ENCODE measurements at regions of chr7 and their contacts with region 1.

Region 1: DNA sequence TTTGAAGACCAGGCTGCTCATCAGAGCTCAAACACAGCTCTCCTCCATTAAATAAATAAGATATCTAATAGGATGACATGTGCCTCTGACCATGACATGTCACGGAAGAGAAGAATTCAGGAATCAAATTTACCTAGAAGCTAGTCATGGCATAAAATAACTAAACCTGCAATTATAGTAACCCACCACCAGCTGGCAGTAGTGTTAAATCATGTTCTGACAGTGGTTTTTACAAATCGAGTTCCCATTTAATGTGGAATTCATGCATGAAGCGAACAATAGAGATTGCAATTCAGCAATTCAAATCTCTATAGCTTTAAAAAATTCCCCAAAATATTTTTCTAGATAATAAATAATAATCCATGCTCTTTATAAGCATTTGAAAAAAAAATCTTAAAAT is 74.6 kb upstream of the IKZF1 start:
- DNase-seq: no peak
- H3K4me3 Mint-ChIP-seq: no peak overlapping the region
- H3K27ac Mint-ChIP-seq: no peak overlapping the region
- H3K4me1 Mint-ChIP-seq: peaks cover 36% of the 10 kb centered on the region
- H3K27me3 Mint-ChIP-seq: no peaks in the 10 kb centered on the region

Region 2: GRCh38 chr7:50212666-50213621 is 17.0 kb before region 1 on chr7:
- CTCF ChIA-PET with region 1: interaction called, 42 read pairs
- POLR2A ChIA-PET with region 1: interaction called, 7 read pairs
- intact Hi-C with region 1: loop called (anchors 1 kb)
- DNase-seq: peak; percentile 47
- H3K4me3 Mint-ChIP-seq: peak overlapping the region; percentile 28
- H3K27ac Mint-ChIP-seq: peak overlapping the region; percentile 71
- H3K4me1 Mint-ChIP-seq: peaks cover 84% of the 10 kb centered on the region
- H3K27me3 Mint-ChIP-seq: no peaks in the 10 kb centered on the region

Region 3: GRCh38 chr7:50246551-50246950 is 16.6 kb after region 1 on chr7:
- CTCF ChIA-PET with region 1: interaction called, 3 read pairs
- POLR2A ChIA-PET with region 1: no interaction called
- intact Hi-C with region 1: loop called (anchors 2 kb)
- DNase-seq: no peak
- H3K4me3 Mint-ChIP-seq: no peak overlapping the region
- H3K27ac Mint-ChIP-seq: no peak overlapping the region
- H3K4me1 Mint-ChIP-seq: peaks cover 10% of the 10 kb centered on the region
- H3K27me3 Mint-ChIP-seq: no peaks in the 10 kb centered on the region

Region 4: GRCh38 chr7:50261593-50261992 is 31.6 kb after region 1 on chr7:
- CTCF ChIA-PET with region 1: interaction called, 18 read pairs
- POLR2A ChIA-PET with region 1: interaction called, 5 read pairs
- intact Hi-C with region 1: loop called (anchors 1 kb)
- DNase-seq: peak; percentile 64
- H3K4me3 Mint-ChIP-seq: peak overlapping the region; percentile 38
- H3K27ac Mint-ChIP-seq: peak overlapping the region; percentile 90
- H3K4me1 Mint-ChIP-seq: peaks cover 82% of the 10 kb centered on the region
- H3K27me3 Mint-ChIP-seq: no peaks in the 10 kb centered on the region

Measured in activated CD4-positive, alpha-beta memory T cell treated with anti-CD3 and anti-CD28 coated beads for 36 hours (primary cell).